Left ventricle myocardium inferior (tissue), 1 donor: ENCODE measurements at regions of chr14 and their contacts with region 1.

Region 1: GRCh38 chr14:21414137-21414631 is 30.4 kb upstream of the SUPT16H start:
- DNase-seq: no peak
- H3K4me3 ChIP-seq: no peak overlapping the region
- H3K27ac ChIP-seq: no peak overlapping the region
- H3K4me1 ChIP-seq: no peaks in the 10 kb centered on the region
- H3K27me3 ChIP-seq: no peaks in the 10 kb centered on the region
- CTCF ChIP-seq: no peak

Region 2: DNA sequence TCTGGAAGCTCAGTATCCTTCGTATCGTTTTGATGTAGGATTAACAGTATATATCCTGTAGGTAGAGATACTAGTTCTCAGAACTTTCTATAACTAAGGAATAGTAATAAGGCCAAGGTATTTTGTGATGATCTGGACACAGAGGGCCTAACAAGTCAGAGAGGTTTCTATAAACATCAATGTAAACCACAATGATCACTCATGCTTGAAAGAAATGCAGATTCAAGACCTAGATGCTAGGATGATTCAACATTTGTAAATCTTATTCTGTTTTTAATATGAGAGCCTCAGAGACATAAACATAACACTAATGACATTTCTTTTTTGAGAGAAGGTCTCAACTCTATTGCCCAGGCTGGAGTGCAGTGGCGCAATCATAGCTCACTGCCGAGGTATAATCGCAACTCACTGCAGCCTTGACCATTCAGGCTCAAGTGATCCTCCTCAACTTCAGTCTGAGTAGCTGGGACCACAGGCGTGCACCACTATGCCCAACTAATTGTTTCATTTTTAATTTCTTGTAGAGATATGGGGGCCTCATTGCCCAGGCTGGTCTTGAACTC is 46.5 kb before region 1 on chr14:
- intact Hi-C with region 1: loop called (anchors 10 kb)
- DNase-seq: no peak
- H3K4me3 ChIP-seq: no peak overlapping the region
- H3K27ac ChIP-seq: no peak overlapping the region
- H3K4me1 ChIP-seq: no peaks in the 10 kb centered on the region
- H3K27me3 ChIP-seq: no peaks in the 10 kb centered on the region
- CTCF ChIP-seq: no peak